ENCODE measurements at regions of chr16 and their contacts with region 1.

Region 1: GRCh38 chr16:72355561-72355960 is 183.6 kb upstream of the PMFBP1 start:
- DNase-seq: no peak
- H3K4me3 ChIP-seq: no peak overlapping the region
- H3K27ac ChIP-seq: no peak overlapping the region
- H3K4me1 ChIP-seq: no peaks in the 10 kb centered on the region
- H3K27me3 ChIP-seq: no peaks in the 10 kb centered on the region
- CTCF ChIP-seq: no peak
- POLR2A ChIP-seq: no peak

Region 2: DNA sequence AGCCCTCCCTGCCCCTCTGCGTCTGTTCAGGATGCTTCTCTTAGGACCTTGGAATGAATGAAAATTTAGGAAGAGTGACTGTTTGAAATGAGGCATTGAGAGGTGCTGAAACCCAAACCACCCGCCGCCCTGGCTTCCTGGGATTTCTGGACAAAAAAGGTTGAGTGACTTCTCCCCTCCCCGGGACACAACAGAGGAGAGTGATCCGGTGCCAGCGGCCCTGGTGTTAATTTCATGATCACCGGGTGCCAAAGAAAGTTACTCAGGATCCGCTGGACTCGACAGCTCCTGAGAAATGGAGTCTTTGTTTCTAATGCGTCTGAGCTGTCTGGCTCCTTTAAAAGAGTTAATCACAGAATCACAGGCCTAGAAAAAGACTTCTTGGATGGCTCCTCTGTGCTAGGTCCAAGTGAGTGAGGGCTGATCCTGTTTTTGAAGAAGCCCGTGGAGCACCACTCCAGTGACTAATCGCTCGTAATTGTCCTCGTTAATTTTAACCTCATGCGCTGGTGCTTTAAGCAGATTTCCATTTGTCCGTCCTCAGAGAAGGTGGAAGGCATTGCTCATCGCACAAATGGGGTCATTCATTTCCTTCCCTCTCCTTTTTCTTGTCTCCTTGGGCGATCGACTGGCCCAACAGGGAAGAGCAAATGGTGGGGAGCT is 836.8 kb after region 1 on chr16:
- intact Hi-C with region 1: loop called (anchors 5 kb)
- DNase-seq: no peak
- H3K4me3 ChIP-seq: no peak overlapping the region
- H3K27ac ChIP-seq: no peak overlapping the region
- H3K4me1 ChIP-seq: no peaks in the 10 kb centered on the region
- H3K27me3 ChIP-seq: peaks cover 0 to 4% of the 10 kb centered on the region in 2 donors
- CTCF ChIP-seq: no peak
- POLR2A ChIP-seq: no peak